Posterior cingulate gyrus (tissue), 11 donors: ENCODE measurements at regions of chr1 and their contacts with region 1.

Region 1: GRCh38 chr1:205485338-205486228 is 18.9 kb upstream of the CDK18 start:
- DNase-seq: peak; percentile 37 to 95 (median 70)

Region 2: GRCh38 chr1:205273551-205273982 is 212.0 kb before region 1 on chr1:
- intact Hi-C with region 1: loop called (anchors 10 kb)
- DNase-seq: peak; percentile 80 to 98 (median 91)

Region 3: DNA sequence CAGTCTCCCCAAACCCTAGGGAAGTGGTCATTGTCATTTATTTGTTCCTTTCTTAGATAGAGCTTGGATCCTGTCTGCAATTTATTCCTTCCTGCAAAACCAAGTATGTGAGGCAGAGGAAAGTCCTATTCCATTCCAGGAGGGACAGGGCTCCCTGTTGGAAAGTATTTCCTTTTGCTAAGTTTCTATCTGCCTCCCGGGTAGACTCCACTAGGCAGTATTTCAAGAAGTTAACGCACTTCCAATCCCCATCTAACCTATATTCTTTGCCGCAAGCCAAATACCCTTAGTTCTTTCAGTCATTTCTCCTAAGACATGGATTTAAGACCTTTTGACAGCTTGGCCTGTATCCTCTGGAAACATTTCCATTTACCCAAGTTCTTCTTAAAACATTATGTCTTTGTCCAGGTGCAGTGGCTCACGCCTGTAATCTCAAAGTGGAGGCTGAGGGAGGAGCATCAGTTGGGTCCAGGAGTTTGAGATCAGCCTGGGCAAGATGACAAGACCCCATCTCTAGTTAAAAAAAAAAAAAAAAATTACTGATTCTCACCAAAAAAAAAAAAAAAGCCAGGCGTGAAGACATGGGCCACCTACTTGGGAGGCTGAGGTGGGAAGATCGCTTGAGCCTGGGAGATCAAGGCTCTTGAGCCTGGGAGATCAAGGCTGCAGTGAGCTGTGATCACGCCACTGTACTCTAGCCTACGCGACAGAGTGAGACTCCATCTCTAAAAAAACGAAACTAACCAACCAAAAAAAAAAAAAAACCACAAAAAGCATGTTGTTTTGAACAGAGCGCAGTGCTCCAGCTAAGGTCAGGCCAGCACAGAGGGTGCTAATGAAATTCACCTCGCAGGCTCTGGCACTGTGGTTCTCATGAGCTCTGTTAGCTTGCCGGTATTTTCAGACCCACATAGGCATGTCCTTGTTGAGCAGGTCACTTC is 200.2 kb before region 1 on chr1:
- intact Hi-C with region 1: no loop called
- DNase-seq: no peak

Region 4: DNA sequence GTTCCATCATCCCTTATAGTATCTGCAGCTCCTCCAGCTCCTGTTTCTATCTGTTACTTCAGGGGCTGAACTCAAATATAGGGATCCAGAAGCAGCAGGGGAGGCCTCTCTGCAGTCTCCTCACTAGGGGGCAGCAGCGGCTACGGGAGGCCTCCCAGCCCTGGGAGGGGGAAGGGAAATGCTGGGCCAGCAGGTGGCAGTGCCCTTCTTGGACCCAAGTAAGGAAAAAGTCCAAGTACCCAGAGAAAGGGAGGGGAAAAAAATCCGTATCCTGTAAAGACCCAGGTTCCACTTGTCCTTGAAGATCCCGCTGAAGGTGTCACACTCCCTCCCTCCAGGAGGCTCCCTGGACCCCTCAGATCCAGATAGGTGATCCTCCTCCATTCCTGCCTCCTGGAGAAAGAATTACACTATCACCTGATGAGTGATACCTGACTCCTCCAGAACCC is 149.9 kb before region 1 on chr1:
- intact Hi-C with region 1: loop called (anchors 1 kb)
- DNase-seq: peak; percentile 67 to 97 (median 86)

Region 5: DNA sequence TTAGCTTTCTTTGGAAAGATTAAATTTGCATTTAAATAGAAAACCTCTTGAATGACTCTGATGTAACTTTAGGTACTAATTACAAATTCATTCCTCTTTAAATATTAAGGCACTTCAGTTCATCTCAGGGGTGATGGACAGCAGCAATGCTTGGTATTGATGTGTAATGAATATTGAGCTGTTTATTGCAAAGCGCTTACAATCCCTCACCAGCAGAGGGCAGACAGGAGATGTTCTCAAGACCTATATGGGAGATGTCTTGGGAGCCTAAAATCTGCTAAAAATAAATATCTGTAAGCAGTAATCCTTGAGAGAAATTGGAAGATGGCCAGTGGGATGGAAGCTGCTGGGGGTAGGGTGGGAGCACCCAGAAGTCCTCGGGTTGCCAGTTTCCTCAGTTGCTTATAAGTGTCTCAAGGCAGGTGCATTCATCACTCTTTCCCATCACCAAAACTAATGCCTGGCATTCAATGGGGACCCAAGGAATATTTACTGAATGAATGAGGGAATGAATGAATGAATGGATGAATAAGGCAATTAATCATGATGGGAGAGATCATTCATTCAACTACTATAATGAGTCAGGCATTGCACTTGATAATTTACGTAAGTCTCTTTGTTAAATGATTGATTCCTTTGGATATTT is 131.2 kb before region 1 on chr1:
- intact Hi-C with region 1: loop called (anchors 1 kb)
- DNase-seq: peak in 5 of 10 donors; percentile 32 to 82 (median 64)

Region 6: DNA sequence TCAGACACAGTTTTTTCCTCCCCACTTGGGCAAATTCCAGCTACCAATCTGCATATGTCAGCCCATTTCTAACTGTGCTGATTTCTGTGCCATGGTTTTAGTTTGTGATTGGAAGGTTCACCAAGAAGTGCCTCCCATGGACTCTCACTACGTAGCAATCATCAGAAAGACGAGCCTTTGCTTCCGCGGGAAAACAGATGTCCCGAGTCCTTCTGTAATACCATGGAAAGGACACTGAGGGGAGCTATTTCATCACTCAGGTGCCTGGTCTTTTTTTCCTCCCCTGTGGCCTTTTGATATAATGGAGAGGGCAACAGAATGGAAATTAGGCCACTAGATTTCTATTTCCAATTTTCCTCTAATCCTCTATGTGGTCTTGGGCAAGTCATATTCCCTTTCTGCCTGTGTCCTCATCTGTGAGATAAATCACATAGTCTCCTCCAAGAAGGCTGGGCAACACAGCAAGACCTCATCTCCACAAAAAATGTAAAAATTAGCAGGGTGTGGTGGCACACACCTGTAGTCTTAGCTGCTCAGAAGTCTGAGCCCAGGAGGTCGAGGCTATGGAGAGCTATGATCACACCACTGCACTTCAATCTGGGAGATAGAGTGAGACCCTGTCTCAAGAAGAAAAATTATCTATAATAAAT is 88.5 kb before region 1 on chr1:
- intact Hi-C with region 1: loop called (anchors 1 kb)
- DNase-seq: peak in 2 of 10 donors; percentile 13 to 62

Region 7: GRCh38 chr1:205523891-205524793 is 38.6 kb after region 1 on chr1:
- intact Hi-C with region 1: loop called (anchors 1 kb)
- DNase-seq: peak; percentile 76 to 98 (median 92)

Region 8: GRCh38 chr1:205700865-205701401 is 215.3 kb after region 1 on chr1:
- intact Hi-C with region 1: no loop called
- DNase-seq: peak in 3 of 10 donors; percentile 16 to 48 (median 39)